ENCODE measurements at regions of chrX and their contacts with region 1.

Region 1: DNA sequence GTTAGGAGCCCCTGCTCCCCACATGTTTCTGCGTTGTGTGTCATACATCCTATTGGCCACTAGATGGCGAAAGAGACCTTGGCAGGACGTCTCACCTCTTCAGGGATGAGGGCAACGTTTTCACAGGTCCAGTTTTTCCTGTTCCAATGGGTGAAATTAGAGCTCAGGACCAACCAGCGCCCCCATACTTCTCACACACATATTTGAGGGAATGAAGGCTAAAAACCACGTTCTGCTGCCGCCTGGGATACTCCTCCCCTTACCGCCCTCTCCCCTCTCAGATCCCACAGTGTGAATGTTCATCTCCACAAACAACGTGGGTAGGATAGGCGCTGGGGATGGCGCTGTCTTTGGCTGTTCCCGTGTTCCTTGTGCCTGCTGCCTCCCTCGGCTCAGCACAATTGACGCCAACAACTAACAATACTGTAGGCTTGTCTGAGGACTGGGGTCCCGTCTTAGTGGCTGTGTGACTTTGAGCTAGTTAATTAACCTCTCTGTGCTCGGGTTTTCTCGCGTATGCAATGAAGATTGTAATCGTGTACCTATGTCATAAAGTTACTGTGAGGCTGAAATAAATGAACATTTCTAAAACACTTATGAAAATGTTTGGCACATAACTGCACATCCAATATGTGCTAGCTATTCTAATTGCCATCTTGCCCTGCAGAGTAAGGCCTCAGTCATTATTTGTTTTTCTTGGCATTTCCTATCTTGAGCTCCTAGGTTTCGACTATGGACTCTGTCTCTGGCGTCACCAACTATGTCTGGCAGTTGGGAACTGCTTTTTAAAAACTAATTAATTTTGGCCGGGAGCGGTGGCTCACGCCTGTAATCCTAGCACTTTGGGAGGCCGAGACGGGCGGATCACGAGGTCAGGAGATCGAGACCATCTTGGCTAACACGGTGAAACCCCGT is 181.3 kb upstream of the STK26 start:
- DNase-seq: peak; percentile 65 to 75 (median 67)
- ATAC-seq: peak; percentile 94
- H3K4me3 ChIP-seq: no peak overlapping the region
- H3K27ac ChIP-seq: no peak overlapping the region
- H3K4me1 ChIP-seq: peaks cover 5 to 19% of the 10 kb centered on the region in 2 experiments; a peak in 4 of 5 replicates
- H3K27me3 ChIP-seq: no peaks in the 10 kb centered on the region
- CTCF ChIP-seq: peak; percentile 79 to 84 (median 80)
- EP300 ChIP-seq: no peak
- POLR2A ChIP-seq: no peak
- RAD21 ChIP-seq: peak; percentile 79 to 86

Region 2: GRCh38 chrX:131577999-131578738 is 263.6 kb before region 1 on chrX:
- CTCF ChIA-PET with region 1: no interaction called
- POLR2A ChIA-PET with region 1: no interaction called
- in situ Hi-C with region 1: no loop called
- intact Hi-C with region 1: no loop called
- DNase-seq: peak in 1 of 4 experiments; percentile 35
- ATAC-seq: peak; percentile 87
- H3K4me3 ChIP-seq: peak overlapping the region; percentile 48
- H3K27ac ChIP-seq: peak overlapping the region; percentile 65
- H3K4me1 ChIP-seq: no peaks in the 10 kb centered on the region
- H3K27me3 ChIP-seq: no peaks in the 10 kb centered on the region
- CTCF ChIP-seq: no peak
- EP300 ChIP-seq: no peak
- POLR2A ChIP-seq: peak; percentile 57; the same call in 1 of the 2 replicates
- RAD21 ChIP-seq: no peak

Region 3: DNA sequence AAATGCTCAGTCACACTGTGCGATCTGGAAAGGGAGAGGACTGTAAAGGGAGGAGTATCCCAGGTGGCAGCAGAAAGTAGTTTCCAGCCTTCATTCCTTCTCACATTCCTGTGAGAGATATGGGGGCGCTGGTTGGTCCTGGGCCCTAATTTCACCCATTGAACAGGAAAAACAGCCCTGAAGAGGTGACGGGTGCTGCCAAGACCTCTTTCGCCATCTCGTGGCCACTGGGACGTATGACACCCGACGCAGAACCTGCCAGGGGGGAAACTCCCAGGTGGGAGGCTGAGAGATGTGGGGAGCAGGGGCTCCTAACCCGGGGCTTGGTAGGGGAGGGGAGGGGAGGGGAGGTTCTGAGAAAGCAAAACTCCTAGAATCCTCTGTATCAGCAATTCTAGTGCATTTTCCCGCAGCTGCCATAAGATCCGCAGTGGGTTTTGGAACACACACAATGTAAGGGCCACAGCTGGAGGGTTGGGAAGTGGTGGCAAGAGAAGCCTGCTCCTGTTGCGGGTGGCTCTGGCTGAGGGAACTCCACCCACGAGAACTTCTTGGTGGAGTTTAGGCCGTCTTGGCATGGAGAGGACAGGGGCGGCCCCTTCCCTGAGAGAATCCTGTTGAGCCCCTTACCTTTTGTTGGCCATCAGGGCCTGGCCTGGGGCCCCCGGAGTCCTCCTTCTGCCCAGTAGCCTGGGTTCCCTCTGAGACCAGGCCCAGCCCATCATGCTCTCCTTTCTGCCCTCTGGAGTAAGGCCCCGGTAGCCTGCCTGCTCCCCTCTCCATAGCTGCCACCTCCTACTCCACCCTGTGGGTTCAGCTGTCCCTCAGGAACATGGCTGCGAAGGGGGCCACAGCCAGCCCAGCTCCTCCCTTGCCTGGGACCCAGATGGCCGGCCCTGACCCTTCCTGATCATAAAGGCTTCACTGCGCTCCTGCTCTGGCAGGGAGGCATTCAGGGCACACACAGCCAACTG is 163.8 kb before region 1 on chrX:
- CTCF ChIA-PET with region 1: no interaction called
- POLR2A ChIA-PET with region 1: no interaction called
- in situ Hi-C with region 1: loop called (anchors 5 kb)
- intact Hi-C with region 1: no loop called
- DNase-seq: peak; percentile 50 to 74 (median 70)
- ATAC-seq: peak; percentile 87
- H3K4me3 ChIP-seq: no peak overlapping the region
- H3K27ac ChIP-seq: no peak overlapping the region
- H3K4me1 ChIP-seq: no peaks in the 10 kb centered on the region
- H3K27me3 ChIP-seq: no peaks in the 10 kb centered on the region; a peak in 1 of 5 replicates
- CTCF ChIP-seq: peak; percentile 68 to 74 (median 74)
- EP300 ChIP-seq: no peak
- POLR2A ChIP-seq: no peak
- RAD21 ChIP-seq: peak; percentile 40 to 67

Region 4: GRCh38 chrX:131923611-131924235 is 82.0 kb after region 1 on chrX:
- CTCF ChIA-PET with region 1: no interaction called
- POLR2A ChIA-PET with region 1: no interaction called
- in situ Hi-C with region 1: no loop called
- intact Hi-C with region 1: no loop called
- DNase-seq: peak in 2 of 4 experiments; percentile 7 to 43
- ATAC-seq: peak; percentile 67
- H3K4me3 ChIP-seq: no peak overlapping the region
- H3K27ac ChIP-seq: no peak overlapping the region; the same call in 2 of the 3 replicates
- H3K4me1 ChIP-seq: peaks cover 0 to 8% of the 10 kb centered on the region in 2 experiments; a peak in 3 of 5 replicates
- H3K27me3 ChIP-seq: no peaks in the 10 kb centered on the region
- CTCF ChIP-seq: no peak
- EP300 ChIP-seq: no peak
- POLR2A ChIP-seq: no peak
- RAD21 ChIP-seq: no peak

Region 5: GRCh38 chrX:132022967-132023895 is 181.5 kb after region 1 on chrX and contains the start of gene STK26:
- CTCF ChIA-PET with region 1: no interaction called
- POLR2A ChIA-PET with region 1: interaction called, 3 read pairs
- in situ Hi-C with region 1: no loop called
- intact Hi-C with region 1: loop called (anchors 5 kb)
- DNase-seq: peak; percentile 79 to 89 (median 82)
- ATAC-seq: peak; percentile 87
- H3K4me3 ChIP-seq: peak within 1 kb of the TSS; percentile 95
- H3K27ac ChIP-seq: peak within 1 kb of the TSS; percentile 89
- H3K4me1 ChIP-seq: peaks cover 9 to 17% of the 10 kb centered on the region in 2 experiments; a peak in 3 of 5 replicates
- H3K27me3 ChIP-seq: no peaks in the 10 kb centered on the region
- CTCF ChIP-seq: no peak
- EP300 ChIP-seq: no peak
- POLR2A ChIP-seq: peak; percentile 94
- RAD21 ChIP-seq: no peak
- polyA plus RNA-seq, gene STK26: 28.1 to 29.3 TPM

Region 6: GRCh38 chrX:132219343-132219768 is 377.6 kb after region 1 on chrX and contains the start of gene RAP2C:
- CTCF ChIA-PET with region 1: no interaction called
- POLR2A ChIA-PET with region 1: no interaction called
- in situ Hi-C with region 1: no loop called
- intact Hi-C with region 1: loop called (anchors 2 kb)
- DNase-seq: peak; percentile 55 to 88 (median 67)
- ATAC-seq: peak; percentile 83
- H3K4me3 ChIP-seq: peak within 1 kb of the TSS; percentile 70
- H3K27ac ChIP-seq: peak within 1 kb of the TSS; percentile 74
- H3K4me1 ChIP-seq: peaks cover 0 to 4% of the 10 kb centered on the region in 2 experiments; a peak in 2 of 5 replicates
- H3K27me3 ChIP-seq: no peaks in the 10 kb centered on the region
- CTCF ChIP-seq: peak; percentile 67 to 69 (median 69)
- EP300 ChIP-seq: no peak
- POLR2A ChIP-seq: no peak
- RAD21 ChIP-seq: peak; percentile 67 to 71
- polyA plus RNA-seq, gene RAP2C: 13.0 to 16.6 TPM

Region 7: DNA sequence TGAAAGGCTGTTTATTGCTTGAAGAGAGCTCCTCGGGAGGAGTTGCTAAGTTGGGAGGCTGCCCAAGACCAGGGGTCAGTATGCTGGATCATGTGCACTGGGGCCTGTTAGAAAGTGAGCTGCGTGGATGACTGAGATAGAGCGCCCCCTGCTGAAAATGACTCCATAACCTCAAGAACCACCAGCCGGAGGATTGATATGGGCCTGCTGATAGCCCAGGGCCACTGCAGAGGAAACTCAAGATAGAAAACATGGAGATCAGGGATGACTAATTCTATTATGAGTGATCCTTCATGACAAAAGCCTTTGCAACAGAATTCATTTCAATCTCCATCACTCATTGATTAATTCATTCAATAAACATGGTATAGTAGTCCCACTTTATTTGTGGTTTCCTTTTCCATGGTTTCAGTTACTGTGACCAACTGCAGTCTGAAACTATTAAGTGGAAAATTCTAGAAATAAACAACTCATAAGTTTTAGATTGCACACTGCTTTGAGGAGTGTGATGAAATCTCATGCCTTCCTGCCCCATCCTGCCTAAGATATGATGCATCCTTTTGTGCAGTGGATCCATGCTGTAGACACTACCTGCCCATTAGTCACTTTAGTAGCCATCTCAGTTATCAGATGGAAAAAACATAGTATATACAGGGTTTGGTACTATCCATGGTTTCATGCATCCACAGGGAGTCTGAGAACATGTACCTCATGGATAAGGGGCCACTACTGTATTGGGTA is 773.8 kb after region 1 on chrX:
- CTCF ChIA-PET with region 1: no interaction called
- POLR2A ChIA-PET with region 1: no interaction called
- in situ Hi-C with region 1: loop called (anchors 10 kb)
- intact Hi-C with region 1: loop called (anchors 5 kb)
- DNase-seq: peak; percentile 23 to 52 (median 33)
- ATAC-seq: peak; percentile 89
- H3K4me3 ChIP-seq: no peak overlapping the region
- H3K27ac ChIP-seq: no peak overlapping the region
- H3K4me1 ChIP-seq: no peaks in the 10 kb centered on the region
- H3K27me3 ChIP-seq: no peaks in the 10 kb centered on the region
- CTCF ChIP-seq: peak; percentile 48 to 66 (median 55)
- EP300 ChIP-seq: no peak
- POLR2A ChIP-seq: no peak
- RAD21 ChIP-seq: peak; percentile 28 to 38